Activated CD4-positive, alpha-beta memory T cell treated with anti-CD3 and anti-CD28 coated beads for 36 hours (primary cell): ENCODE measurements at regions of chr1 and their contacts with region 1.

Region 1: GRCh38 chr1:203340112-203340804 is 10.7 kb downstream of the FMOD start:
- DNase-seq: peak; percentile 71
- H3K4me3 Mint-ChIP-seq: no peak overlapping the region
- H3K27ac Mint-ChIP-seq: no peak overlapping the region
- H3K4me1 Mint-ChIP-seq: peaks cover 23% of the 10 kb centered on the region
- H3K27me3 Mint-ChIP-seq: peaks cover 11% of the 10 kb centered on the region

Region 2: DNA sequence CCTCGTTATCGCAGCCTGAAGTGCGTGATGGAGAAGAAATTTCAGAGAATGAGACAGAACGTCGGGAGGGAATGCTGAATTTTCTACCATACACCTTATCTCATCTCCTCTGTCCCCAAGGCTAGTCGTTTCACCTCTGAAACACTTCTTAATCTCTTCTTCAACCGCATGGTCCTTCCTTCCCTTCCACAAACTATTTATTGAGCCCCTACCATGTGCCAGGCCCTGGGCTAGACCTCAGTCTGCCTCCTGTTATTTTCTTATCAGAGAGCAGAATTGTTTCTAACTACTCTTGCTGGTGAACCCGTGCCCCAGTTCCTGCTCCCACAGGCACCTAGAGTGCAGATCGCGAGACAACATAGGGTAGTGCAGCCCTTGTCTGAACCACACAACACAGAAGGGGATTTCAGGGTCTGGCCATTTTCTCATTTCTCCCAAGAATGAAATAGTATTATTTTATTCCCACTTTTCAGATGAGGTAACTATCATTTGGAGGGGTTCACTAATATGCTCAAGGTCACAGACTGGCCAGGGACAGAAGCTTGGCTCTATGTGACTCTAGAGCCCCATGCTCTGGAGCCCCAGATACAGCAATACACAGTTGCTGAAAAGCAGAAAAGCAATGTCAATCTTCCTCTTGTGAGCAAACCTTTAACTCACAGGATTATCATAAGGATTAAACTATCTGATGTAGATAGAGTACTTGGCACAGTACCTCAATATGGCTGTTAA is 381.5 kb before region 1 on chr1:
- CTCF ChIA-PET with region 1: no interaction called
- POLR2A ChIA-PET with region 1: no interaction called
- intact Hi-C with region 1: no loop called
- DNase-seq: peak; percentile 26
- H3K4me3 Mint-ChIP-seq: peak overlapping the region; percentile 76
- H3K27ac Mint-ChIP-seq: peak overlapping the region; percentile 50
- H3K4me1 Mint-ChIP-seq: peaks cover 41% of the 10 kb centered on the region
- H3K27me3 Mint-ChIP-seq: no peaks in the 10 kb centered on the region

Region 3: DNA sequence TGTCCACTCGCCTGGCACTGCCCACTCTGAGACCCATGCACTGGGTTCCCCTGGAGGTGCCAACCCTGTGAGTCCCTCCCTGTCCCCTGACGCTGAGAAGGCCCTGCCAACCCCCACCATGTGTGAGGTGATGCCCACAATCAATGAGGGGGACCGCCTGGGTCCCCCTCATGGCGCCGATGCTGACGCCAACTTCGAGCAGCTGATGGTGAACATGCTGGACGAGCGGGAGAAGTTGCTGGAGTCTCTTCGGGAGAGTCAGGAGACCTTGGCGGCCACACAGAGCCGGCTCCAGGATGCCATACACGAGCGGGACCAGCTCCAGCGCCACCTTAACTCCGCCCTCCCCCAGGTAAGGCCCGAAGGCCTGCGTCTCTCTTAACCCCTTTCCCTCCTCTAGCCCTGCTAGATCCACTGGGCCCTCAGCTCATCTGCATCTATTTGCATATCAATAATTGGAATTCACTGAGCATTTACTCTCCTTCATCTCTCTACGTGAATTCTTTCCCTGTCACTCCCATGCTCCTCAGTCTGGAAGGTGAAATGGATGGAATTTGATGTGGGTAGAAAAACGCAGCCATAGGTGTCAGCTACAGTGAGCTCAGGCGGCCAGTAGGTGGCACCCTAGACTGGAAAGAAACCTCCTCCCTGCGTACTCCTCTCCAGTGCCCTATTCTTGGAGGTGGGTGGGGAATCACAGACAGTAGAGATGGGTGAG is 301.2 kb before region 1 on chr1:
- CTCF ChIA-PET with region 1: interaction called, 4 read pairs
- POLR2A ChIA-PET with region 1: no interaction called
- intact Hi-C with region 1: loop called (anchors 10 kb)
- DNase-seq: peak; percentile 73
- H3K4me3 Mint-ChIP-seq: no peak overlapping the region
- H3K27ac Mint-ChIP-seq: no peak overlapping the region
- H3K4me1 Mint-ChIP-seq: no peaks in the 10 kb centered on the region
- H3K27me3 Mint-ChIP-seq: peaks cover 6% of the 10 kb centered on the region

Region 4: DNA sequence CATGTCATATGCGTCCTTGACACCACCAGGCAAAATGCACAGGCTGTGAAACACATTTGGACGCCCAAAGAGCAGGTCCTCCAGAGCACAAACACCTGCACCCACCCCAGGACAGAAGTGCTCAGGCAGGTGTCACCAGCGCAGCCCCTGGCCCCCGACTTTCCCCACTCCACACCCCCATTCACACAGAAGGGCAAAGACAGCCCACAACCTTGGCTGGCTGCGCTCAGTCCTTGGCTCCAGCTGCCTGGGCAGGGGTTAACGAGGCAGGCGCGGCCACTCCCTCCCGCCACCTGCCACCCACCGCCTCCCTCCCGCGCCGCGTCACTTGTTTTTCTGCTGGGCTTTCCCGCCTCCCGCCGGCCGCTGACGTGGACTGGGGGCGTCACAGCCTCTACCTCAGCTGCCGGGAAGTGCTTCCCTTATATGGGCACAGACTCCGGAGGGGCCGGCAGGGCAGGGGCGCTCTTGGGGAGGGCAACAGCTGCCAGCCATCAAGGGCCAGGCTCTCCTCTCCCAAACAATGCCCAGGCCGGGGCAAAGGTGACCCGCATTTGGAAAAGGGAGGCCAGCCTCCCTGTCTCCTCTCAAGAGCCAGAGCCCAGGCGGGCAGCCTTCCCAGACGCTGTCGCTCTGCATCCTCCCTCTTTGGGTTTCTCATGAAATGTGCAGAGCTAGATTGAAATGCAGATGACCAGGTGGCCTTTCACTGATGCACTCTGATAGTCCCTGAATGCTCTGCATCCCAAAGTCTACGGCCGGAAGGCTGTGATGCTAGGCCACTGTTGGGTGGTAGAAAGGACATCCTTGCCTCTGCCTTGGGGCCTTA is 49.8 kb before region 1 on chr1:
- CTCF ChIA-PET with region 1: interaction called, 119 read pairs
- POLR2A ChIA-PET with region 1: interaction called, 3 read pairs
- intact Hi-C with region 1: no loop called
- DNase-seq: peak; percentile 99
- H3K4me3 Mint-ChIP-seq: peak overlapping the region; percentile 82
- H3K27ac Mint-ChIP-seq: peak overlapping the region; percentile 100
- H3K4me1 Mint-ChIP-seq: peaks cover 76% of the 10 kb centered on the region
- H3K27me3 Mint-ChIP-seq: peaks cover 2% of the 10 kb centered on the region

Region 5: GRCh38 chr1:203320591-203321272 is 19.5 kb before region 1 on chr1:
- CTCF ChIA-PET with region 1: interaction called, 150 read pairs
- POLR2A ChIA-PET with region 1: no interaction called
- intact Hi-C with region 1: no loop called
- DNase-seq: peak; percentile 78
- H3K4me3 Mint-ChIP-seq: peak overlapping the region; percentile 22
- H3K27ac Mint-ChIP-seq: peak overlapping the region; percentile 88
- H3K4me1 Mint-ChIP-seq: peaks cover 75% of the 10 kb centered on the region
- H3K27me3 Mint-ChIP-seq: no peaks in the 10 kb centered on the region

Region 6: GRCh38 chr1:203351037-203352013 is 11.1 kb after region 1 on chr1 and contains the start of gene FMOD:
- CTCF ChIA-PET with region 1: interaction called, 31 read pairs
- POLR2A ChIA-PET with region 1: no interaction called
- intact Hi-C with region 1: no loop called
- DNase-seq: peak; percentile 28
- H3K4me3 Mint-ChIP-seq: no peak within 1 kb of the TSS
- H3K27ac Mint-ChIP-seq: no peak within 1 kb of the TSS
- H3K4me1 Mint-ChIP-seq: peaks cover 9% of the 10 kb centered on the region
- H3K27me3 Mint-ChIP-seq: peaks cover 28% of the 10 kb centered on the region
- total RNA-seq, gene FMOD: 0.95 to 1.9 TPM

Region 7: DNA sequence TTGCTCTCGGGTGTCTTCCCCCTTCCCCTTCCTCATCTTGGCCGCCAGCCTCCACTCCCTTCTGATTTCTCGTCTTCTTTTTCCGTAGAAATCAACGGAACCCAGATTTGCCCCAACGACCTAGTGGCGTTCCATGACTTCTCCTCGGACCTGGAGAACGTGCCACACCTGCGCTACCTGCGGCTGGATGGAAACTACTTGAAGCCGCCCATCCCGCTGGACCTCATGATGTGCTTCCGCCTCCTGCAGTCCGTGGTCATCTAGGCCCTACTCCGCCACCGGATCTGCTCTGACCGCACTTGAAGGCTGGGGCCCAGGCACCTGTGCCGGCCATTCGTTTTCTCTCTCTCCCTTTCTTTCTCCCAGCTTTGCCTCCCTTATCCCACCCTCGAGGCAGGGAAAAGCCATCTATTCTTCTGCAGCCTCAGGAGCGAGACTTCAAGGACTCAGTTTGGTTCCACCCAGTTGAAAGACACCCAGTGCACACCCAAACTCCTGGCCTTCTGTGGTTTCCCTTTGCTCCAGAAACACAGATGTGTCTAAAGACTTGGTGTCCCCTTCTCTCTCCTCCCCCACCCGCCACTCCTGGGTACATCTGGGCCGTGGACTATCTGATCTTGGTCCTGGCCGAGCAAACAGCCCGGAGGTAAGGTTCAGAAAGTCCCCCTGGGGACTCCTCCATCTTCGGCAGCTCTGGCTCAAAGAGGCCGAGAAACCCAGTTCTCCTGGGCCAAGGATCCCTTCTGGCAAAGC is 146.5 kb after region 1 on chr1:
- CTCF ChIA-PET with region 1: interaction called, 203 read pairs
- POLR2A ChIA-PET with region 1: no interaction called
- intact Hi-C with region 1: loop called (anchors 1 kb)
- DNase-seq: no peak
- H3K4me3 Mint-ChIP-seq: peak overlapping the region; percentile 67
- H3K27ac Mint-ChIP-seq: no peak overlapping the region
- H3K4me1 Mint-ChIP-seq: peaks cover 9% of the 10 kb centered on the region
- H3K27me3 Mint-ChIP-seq: no peaks in the 10 kb centered on the region